ENCODE measurements at regions of chr5 and their contacts with region 1.

Region 1: GRCh38 chr5:113606298-113607134 is 93.0 kb downstream of the YTHDC2 start:
- DNase-seq: peak in 12 of 14 experiments; percentile 6 to 77 (median 22)
- ATAC-seq: peak; percentile 74
- H3K4me3 ChIP-seq: no peak overlapping the region
- H3K4me3 Mint-ChIP-seq: no peak overlapping the region
- H3K27ac ChIP-seq: no peak overlapping the region
- H3K27ac Mint-ChIP-seq: no peak overlapping the region
- H3K4me1 ChIP-seq: peaks cover 4% of the 10 kb centered on the region
- H3K4me1 Mint-ChIP-seq: no peaks in the 10 kb centered on the region
- H3K27me3 ChIP-seq: peaks cover 0 to 5% of the 10 kb centered on the region in 2 experiments
- H3K27me3 Mint-ChIP-seq: peaks cover 28% of the 10 kb centered on the region
- CTCF ChIP-seq: peak; percentile 88

Region 2: DNA sequence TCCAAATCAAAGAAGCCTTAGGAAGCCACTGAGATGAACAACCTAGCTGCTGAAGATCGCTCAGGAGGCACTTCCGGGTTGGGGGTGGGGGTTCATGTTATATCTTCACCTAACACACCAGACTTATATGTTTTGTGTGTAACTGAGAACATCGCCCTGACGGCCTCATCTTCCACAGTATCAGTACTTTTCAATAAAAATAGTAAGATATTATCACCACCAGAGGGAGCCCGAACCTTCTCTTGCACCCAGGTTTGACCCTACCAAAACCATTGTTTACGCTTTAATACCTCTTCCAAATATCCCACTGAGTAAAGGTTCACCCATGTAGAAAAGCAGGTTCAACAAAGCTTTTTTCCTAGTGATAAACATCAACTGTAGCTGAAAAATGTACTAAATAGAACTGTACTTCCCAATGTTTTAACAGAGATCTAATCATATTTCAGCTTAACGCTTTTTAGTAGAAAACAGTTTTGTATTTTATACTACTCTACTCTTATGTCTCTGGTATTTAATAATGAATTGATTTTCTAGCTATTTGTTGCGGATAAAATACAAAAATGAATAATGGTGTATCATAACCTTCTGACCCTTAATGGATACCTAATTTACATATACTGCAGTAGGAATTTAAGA is 1431.4 kb before region 1 on chr5:
- CTCF ChIA-PET with region 1: no interaction called
- POLR2A ChIA-PET with region 1: no interaction called
- intact Hi-C with region 1: loop called (anchors 5 to 10 kb)
- DNase-seq: peak in 6 of 14 experiments; percentile 1 to 70 (median 46)
- ATAC-seq: peak; percentile 56
- H3K4me3 ChIP-seq: no peak overlapping the region
- H3K4me3 Mint-ChIP-seq: no peak overlapping the region
- H3K27ac ChIP-seq: no peak overlapping the region
- H3K27ac Mint-ChIP-seq: no peak overlapping the region
- H3K4me1 ChIP-seq: peaks cover 3% of the 10 kb centered on the region
- H3K4me1 Mint-ChIP-seq: no peaks in the 10 kb centered on the region
- H3K27me3 ChIP-seq: no peaks in the 10 kb centered on the region
- H3K27me3 Mint-ChIP-seq: peaks cover 14% of the 10 kb centered on the region
- CTCF ChIP-seq: peak; percentile 75

Region 3: GRCh38 chr5:112551419-112552032 is 1055.0 kb before region 1 on chr5:
- CTCF ChIA-PET with region 1: no interaction called
- POLR2A ChIA-PET with region 1: no interaction called
- intact Hi-C with region 1: loop called (anchors 2 to 5 kb)
- DNase-seq: peak in 9 of 14 experiments; percentile 3 to 76 (median 25)
- ATAC-seq: peak; percentile 52
- H3K4me3 ChIP-seq: no peak overlapping the region
- H3K4me3 Mint-ChIP-seq: no peak overlapping the region
- H3K27ac ChIP-seq: no peak overlapping the region
- H3K27ac Mint-ChIP-seq: no peak overlapping the region
- H3K4me1 ChIP-seq: no peaks in the 10 kb centered on the region
- H3K4me1 Mint-ChIP-seq: no peaks in the 10 kb centered on the region
- H3K27me3 ChIP-seq: peaks cover 2 to 7% of the 10 kb centered on the region in 2 experiments
- H3K27me3 Mint-ChIP-seq: peaks cover 4% of the 10 kb centered on the region
- CTCF ChIP-seq: peak; percentile 92

Region 4: GRCh38 chr5:112995764-112996618 is 610.5 kb before region 1 on chr5:
- CTCF ChIA-PET with region 1: interaction called, 8 read pairs
- POLR2A ChIA-PET with region 1: no interaction called
- intact Hi-C with region 1: loop called (anchors 1 to 2 kb)
- DNase-seq: peak; percentile 60 to 84 (median 76)
- ATAC-seq: peak; percentile 85
- H3K4me3 ChIP-seq: no peak overlapping the region
- H3K4me3 Mint-ChIP-seq: no peak overlapping the region
- H3K27ac ChIP-seq: no peak overlapping the region
- H3K27ac Mint-ChIP-seq: no peak overlapping the region
- H3K4me1 ChIP-seq: no peaks in the 10 kb centered on the region
- H3K4me1 Mint-ChIP-seq: peaks cover 52% of the 10 kb centered on the region
- H3K27me3 ChIP-seq: no peaks in the 10 kb centered on the region
- H3K27me3 Mint-ChIP-seq: no peaks in the 10 kb centered on the region
- CTCF ChIP-seq: peak; percentile 98

Region 5: DNA sequence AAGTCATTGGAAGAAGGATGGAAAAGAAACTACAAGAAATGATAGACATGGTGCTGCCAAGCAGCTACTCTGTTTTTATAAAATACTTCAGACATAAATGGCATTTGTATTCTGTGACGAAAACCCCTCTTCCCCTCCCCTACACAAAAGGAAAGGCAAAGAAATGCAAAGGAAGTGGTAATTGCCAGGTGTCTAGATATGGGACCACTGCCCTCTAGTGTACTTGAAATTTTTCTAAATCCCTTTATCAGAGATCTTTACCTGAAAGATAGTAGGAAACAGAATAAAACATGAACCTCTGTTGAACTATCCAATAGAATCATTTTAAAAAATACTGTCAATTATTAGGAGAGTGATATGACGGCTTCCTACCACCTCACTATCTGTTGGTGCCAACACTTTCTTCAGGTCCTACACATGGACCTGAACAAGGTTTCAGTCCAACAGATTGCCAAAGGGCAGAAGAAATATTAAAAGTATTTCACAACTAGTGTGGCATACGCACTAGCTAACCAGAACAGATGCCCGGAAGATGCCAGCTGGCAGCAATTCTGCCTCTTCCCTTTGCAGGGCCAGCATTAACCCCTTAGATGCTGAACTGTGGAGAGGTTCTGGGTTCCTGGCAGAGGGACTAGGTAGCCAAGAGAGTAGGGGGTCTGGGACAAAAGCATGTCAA is 275.8 kb before region 1 on chr5:
- CTCF ChIA-PET with region 1: interaction called, 3 read pairs
- POLR2A ChIA-PET with region 1: no interaction called
- intact Hi-C with region 1: loop called in 1 of 2 experiments (anchors 1 kb)
- DNase-seq: peak in 4 of 14 experiments; percentile 14 to 78 (median 77)
- ATAC-seq: peak; percentile 90
- H3K4me3 ChIP-seq: no peak overlapping the region
- H3K4me3 Mint-ChIP-seq: no peak overlapping the region
- H3K27ac ChIP-seq: no peak overlapping the region
- H3K27ac Mint-ChIP-seq: peak overlapping the region; percentile 60
- H3K4me1 ChIP-seq: no peaks in the 10 kb centered on the region
- H3K4me1 Mint-ChIP-seq: peaks cover 21% of the 10 kb centered on the region
- H3K27me3 ChIP-seq: no peaks in the 10 kb centered on the region
- H3K27me3 Mint-ChIP-seq: no peaks in the 10 kb centered on the region
- CTCF ChIP-seq: peak; percentile 76

Region 6: DNA sequence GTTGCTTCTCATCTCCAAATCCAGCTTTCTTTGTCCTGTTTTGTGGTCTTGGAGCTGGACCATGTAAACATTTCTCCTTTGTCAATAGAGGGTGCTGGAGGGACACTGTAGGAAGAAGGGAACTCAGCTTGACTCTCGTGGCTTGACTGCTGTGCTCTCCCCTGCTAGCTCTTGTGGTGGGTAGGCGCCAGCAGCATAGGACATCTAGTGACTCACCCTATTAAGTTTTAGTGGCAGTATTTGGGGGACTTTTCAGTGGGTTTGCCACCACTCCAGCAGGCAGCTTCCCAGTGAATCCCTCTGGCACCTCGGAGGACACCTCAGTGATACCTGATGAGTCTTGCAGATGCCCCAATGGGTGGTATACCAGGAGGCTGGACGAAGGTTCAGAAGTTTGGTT is 269.5 kb before region 1 on chr5:
- CTCF ChIA-PET with region 1: interaction called, 3 read pairs
- POLR2A ChIA-PET with region 1: no interaction called
- intact Hi-C with region 1: loop called (anchors 1 to 2 kb)
- DNase-seq: peak in 3 of 14 experiments; percentile 17 to 26 (median 19)
- ATAC-seq: no peak
- H3K4me3 ChIP-seq: no peak overlapping the region
- H3K4me3 Mint-ChIP-seq: no peak overlapping the region
- H3K27ac ChIP-seq: no peak overlapping the region
- H3K27ac Mint-ChIP-seq: no peak overlapping the region
- H3K4me1 ChIP-seq: no peaks in the 10 kb centered on the region
- H3K4me1 Mint-ChIP-seq: peaks cover 13% of the 10 kb centered on the region
- H3K27me3 ChIP-seq: no peaks in the 10 kb centered on the region
- H3K27me3 Mint-ChIP-seq: peaks cover 17% of the 10 kb centered on the region
- CTCF ChIP-seq: no peak

Region 7: GRCh38 chr5:113378959-113379541 is 227.5 kb before region 1 on chr5:
- CTCF ChIA-PET with region 1: no interaction called
- POLR2A ChIA-PET with region 1: no interaction called
- intact Hi-C with region 1: loop called (anchors 2 to 5 kb)
- DNase-seq: peak; percentile 19 to 74 (median 41)
- ATAC-seq: peak; percentile 68
- H3K4me3 ChIP-seq: no peak overlapping the region
- H3K4me3 Mint-ChIP-seq: peak overlapping the region; percentile 7
- H3K27ac ChIP-seq: no peak overlapping the region
- H3K27ac Mint-ChIP-seq: no peak overlapping the region
- H3K4me1 ChIP-seq: peaks cover 11% of the 10 kb centered on the region
- H3K4me1 Mint-ChIP-seq: peaks cover 58% of the 10 kb centered on the region
- H3K27me3 ChIP-seq: peaks cover 0 to 4% of the 10 kb centered on the region in 2 experiments
- H3K27me3 Mint-ChIP-seq: peaks cover 32% of the 10 kb centered on the region
- CTCF ChIP-seq: peak; percentile 82

Region 8: GRCh38 chr5:113447498-113448050 is 158.9 kb before region 1 on chr5:
- CTCF ChIA-PET with region 1: no interaction called
- POLR2A ChIA-PET with region 1: no interaction called
- intact Hi-C with region 1: no loop called
- DNase-seq: no peak
- ATAC-seq: no peak
- H3K4me3 ChIP-seq: no peak overlapping the region
- H3K4me3 Mint-ChIP-seq: no peak overlapping the region
- H3K27ac ChIP-seq: no peak overlapping the region
- H3K27ac Mint-ChIP-seq: no peak overlapping the region
- H3K4me1 ChIP-seq: no peaks in the 10 kb centered on the region
- H3K4me1 Mint-ChIP-seq: peaks cover 11% of the 10 kb centered on the region
- H3K27me3 ChIP-seq: peaks cover 0 to 2% of the 10 kb centered on the region in 2 experiments
- H3K27me3 Mint-ChIP-seq: peaks cover 49% of the 10 kb centered on the region
- CTCF ChIP-seq: no peak